Activated T-helper 1 cell treated with anti-CD3 and anti-CD28 coated beads, Interleukin-12 subunit alpha, Interleukin-12 subunit beta, Interleukin-2, Interleukin-4 antibody, amounts not matched to agents 30 ng/mL and 10 ng/mL and 1 ng/mL, durations not matched to agents 14 hours and 24 hours and 36 hours (primary cell): ENCODE measurements at regions of chr6 and their contacts with region 1.

Region 1: GRCh38 chr6:90472744-90473143 is 114.1 kb downstream of the MAP3K7 start:
- DNase-seq: peak; percentile 52
- H3K4me3 Mint-ChIP-seq: peak overlapping the region; percentile 68
- H3K27ac Mint-ChIP-seq: peak overlapping the region; percentile 92
- H3K4me1 Mint-ChIP-seq: peaks cover 100% of the 10 kb centered on the region
- H3K27me3 Mint-ChIP-seq: no peaks in the 10 kb centered on the region

Region 2: GRCh38 chr6:89260832-89261231 is 1211.9 kb before region 1 on chr6:
- intact Hi-C with region 1: no loop called
- DNase-seq: no peak
- H3K4me3 Mint-ChIP-seq: no peak overlapping the region
- H3K27ac Mint-ChIP-seq: no peak overlapping the region
- H3K4me1 Mint-ChIP-seq: no peaks in the 10 kb centered on the region
- H3K27me3 Mint-ChIP-seq: peaks cover 6% of the 10 kb centered on the region

Region 3: GRCh38 chr6:89829591-89830385 is 643.0 kb before region 1 on chr6 and contains the start of gene CASP8AP2:
- intact Hi-C with region 1: loop called (anchors 5 kb)
- DNase-seq: peak; percentile 93
- H3K4me3 Mint-ChIP-seq: peak within 1 kb of the TSS; percentile 97
- H3K27ac Mint-ChIP-seq: peak within 1 kb of the TSS; percentile 91
- H3K4me1 Mint-ChIP-seq: peaks cover 23% of the 10 kb centered on the region
- H3K27me3 Mint-ChIP-seq: no peaks in the 10 kb centered on the region
- total RNA-seq, gene CASP8AP2: 38.3 and 40.2 TPM in 2 replicates

Region 4: GRCh38 chr6:90319044-90319443 is 153.7 kb before region 1 on chr6:
- intact Hi-C with region 1: loop called (anchors 1 kb)
- DNase-seq: no peak
- H3K4me3 Mint-ChIP-seq: no peak overlapping the region
- H3K27ac Mint-ChIP-seq: peak overlapping the region; percentile 63
- H3K4me1 Mint-ChIP-seq: peaks cover 19% of the 10 kb centered on the region
- H3K27me3 Mint-ChIP-seq: peaks cover 4% of the 10 kb centered on the region

Region 5: DNA sequence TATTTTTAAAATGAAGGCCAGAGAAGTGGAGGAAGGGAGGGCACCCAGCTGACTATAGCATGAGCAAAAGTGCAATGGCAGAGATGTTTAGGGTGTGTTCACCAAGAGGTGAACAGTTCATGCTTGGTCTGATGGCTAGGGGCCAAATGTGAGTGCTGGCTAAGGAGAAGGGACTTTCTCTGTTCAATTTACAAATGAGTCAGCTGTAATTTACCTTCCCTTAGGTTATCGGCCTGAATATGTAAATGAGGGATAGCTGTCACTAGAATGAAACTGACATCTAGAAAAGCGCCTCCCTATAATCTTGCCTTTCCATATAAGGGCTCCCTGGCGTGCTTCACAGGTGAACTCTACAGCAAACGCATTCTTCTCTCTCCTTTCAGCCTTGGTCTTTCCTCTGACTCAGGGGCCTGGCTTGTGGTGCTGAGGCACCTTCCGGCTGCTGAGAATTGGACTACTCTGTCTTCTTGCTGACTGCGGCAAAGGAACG is 61.4 kb before region 1 on chr6:
- intact Hi-C with region 1: loop called (anchors 1 kb)
- DNase-seq: peak; percentile 59
- H3K4me3 Mint-ChIP-seq: no peak overlapping the region
- H3K27ac Mint-ChIP-seq: peak overlapping the region; percentile 75
- H3K4me1 Mint-ChIP-seq: peaks cover 81% of the 10 kb centered on the region
- H3K27me3 Mint-ChIP-seq: no peaks in the 10 kb centered on the region

Region 6: GRCh38 chr6:90445533-90446108 is 27.1 kb before region 1 on chr6:
- intact Hi-C with region 1: loop called (anchors 1 kb)
- DNase-seq: no peak
- H3K4me3 Mint-ChIP-seq: no peak overlapping the region
- H3K27ac Mint-ChIP-seq: peak overlapping the region; percentile 88
- H3K4me1 Mint-ChIP-seq: peaks cover 66% of the 10 kb centered on the region
- H3K27me3 Mint-ChIP-seq: no peaks in the 10 kb centered on the region